Left colon (tissue), 2 donors: ENCODE measurements at regions of chr16 and their contacts with region 1.

Region 1: DNA sequence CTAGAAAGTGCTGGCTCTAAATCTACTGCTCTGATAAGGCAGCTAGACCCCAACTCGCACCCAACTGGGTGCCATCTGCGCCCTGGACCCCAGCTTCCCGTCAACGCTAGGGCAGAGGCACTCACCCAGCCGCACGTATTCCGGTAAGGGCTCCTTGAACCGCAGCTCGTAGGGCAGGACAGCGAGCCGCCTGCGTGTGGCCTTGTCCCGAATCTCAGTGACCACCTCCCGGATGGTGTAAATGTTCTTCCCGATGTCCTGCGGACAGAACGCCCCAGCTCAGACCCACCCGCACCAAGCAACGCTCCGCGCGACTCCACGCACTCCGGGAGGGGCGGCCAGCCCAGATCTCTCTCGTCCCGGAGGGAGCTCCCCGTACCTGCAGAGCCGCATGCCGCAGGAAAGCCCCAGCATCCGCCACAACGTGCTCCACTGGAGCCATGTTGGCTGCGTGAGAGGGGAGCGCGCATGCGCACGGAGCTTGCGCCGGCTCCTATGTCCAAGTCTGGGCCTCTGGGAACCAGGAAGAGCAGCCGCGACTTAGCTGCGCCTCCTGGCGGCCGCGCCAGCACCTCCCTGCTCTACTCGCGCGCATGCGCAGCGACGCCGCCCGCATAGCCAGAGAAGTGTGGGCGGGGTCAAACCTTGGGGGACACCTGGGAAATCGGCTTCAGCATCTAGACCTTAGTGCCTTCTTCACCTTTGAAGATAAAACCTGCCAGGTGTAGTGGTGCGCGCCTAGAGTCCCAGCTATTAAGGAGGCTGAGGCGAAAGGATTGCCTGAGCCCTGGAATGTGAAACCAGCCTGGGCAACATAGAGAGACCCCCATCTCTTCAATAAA is at the start of gene NOB1:
- DNase-seq: peak; percentile 96
- ATAC-seq: peak; percentile 96
- total RNA-seq, gene NOB1: 35.2 to 37.4 TPM

Region 2: GRCh38 chr16:69709456-69710084 is 45.1 kb before region 1 on chr16:
- intact Hi-C with region 1: loop called in 1 of 2 experiments (anchors 2 kb)
- DNase-seq: no peak
- ATAC-seq: peak; percentile 47